CD14-positive monocyte (primary cell): ENCODE measurements at regions of chr16 and their contacts with region 1.

Region 1: GRCh38 chr16:20741554-20742285 is at the start of gene THUMPD1:
- DNase-seq: peak; percentile 94 to 96 (median 96)
- H3K4me3 ChIP-seq: peak within 1 kb of the TSS; percentile 84 to 97 (median 94)
- H3K4me3 Mint-ChIP-seq: peak within 1 kb of the TSS; percentile 94 to 99
- H3K27ac ChIP-seq: peak within 1 kb of the TSS; percentile 96 to 98
- H3K27ac Mint-ChIP-seq: peak within 1 kb of the TSS; percentile 95 to 98 (median 96)
- H3K4me1 ChIP-seq: peaks cover 44 to 50% of the 10 kb centered on the region in 2 donors
- H3K4me1 Mint-ChIP-seq: peaks cover 37% of the 10 kb centered on the region
- H3K27me3 ChIP-seq: no peaks in the 10 kb centered on the region
- H3K27me3 Mint-ChIP-seq: no peaks in the 10 kb centered on the region
- CTCF ChIP-seq: no peak
- polyA plus RNA-seq, gene THUMPD1: 16.1 to 32.2 (median 23.5) TPM

Region 2: DNA sequence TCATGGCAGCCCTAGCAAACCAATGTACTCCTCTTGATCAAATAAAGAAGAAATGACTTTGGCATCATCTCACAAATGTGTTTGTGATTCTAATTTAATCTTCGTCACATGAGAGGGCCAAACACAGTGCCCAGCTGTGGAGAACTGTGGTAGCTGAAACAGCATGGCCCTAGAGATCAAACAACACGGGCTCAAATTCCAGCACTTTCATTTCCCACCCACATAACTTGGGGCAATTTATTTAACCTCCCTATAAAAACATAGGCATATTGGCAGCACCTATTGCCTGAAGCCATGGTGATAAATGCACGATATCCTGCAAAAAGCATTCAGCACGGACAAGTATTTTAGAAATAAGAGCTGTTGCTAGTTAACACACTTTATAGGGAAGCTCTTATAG is 46.7 kb before region 1 on chr16:
- intact Hi-C with region 1: no loop called
- DNase-seq: no peak
- H3K4me3 ChIP-seq: no peak overlapping the region
- H3K4me3 Mint-ChIP-seq: no peak overlapping the region
- H3K27ac ChIP-seq: no peak overlapping the region
- H3K27ac Mint-ChIP-seq: peak overlapping the region in 1 of 7 donors; percentile 18
- H3K4me1 ChIP-seq: peaks cover 17 to 18% of the 10 kb centered on the region in 2 donors
- H3K4me1 Mint-ChIP-seq: peaks cover 31% of the 10 kb centered on the region
- H3K27me3 ChIP-seq: no peaks in the 10 kb centered on the region
- H3K27me3 Mint-ChIP-seq: peaks cover 0 to 2% (median 0%) of the 10 kb centered on the region in 3 donors
- CTCF ChIP-seq: no peak

Region 3: DNA sequence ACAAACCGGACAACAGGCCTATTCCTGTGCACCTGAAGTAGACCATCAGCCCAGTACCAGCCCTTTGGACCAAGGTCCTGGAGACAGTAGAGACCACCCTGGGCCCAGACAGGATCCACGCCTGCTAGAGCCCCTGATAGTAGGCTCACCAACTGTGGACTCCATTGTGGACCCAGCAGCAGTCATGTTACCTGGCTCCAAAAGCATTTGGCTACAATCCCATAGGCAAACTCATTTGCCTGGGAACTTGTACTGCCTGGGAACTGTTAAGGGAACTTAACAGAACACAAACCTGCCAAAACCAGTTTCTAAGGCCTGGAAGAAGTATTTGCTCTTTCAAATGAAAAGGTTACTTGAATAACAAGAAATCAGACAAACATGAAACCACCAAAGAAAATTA is 34.3 kb before region 1 on chr16:
- intact Hi-C with region 1: no loop called
- DNase-seq: no peak
- H3K4me3 ChIP-seq: no peak overlapping the region
- H3K4me3 Mint-ChIP-seq: no peak overlapping the region
- H3K27ac ChIP-seq: no peak overlapping the region
- H3K27ac Mint-ChIP-seq: peak overlapping the region in 1 of 7 donors; percentile 46
- H3K4me1 ChIP-seq: no peaks in the 10 kb centered on the region
- H3K4me1 Mint-ChIP-seq: no peaks in the 10 kb centered on the region
- H3K27me3 ChIP-seq: no peaks in the 10 kb centered on the region
- H3K27me3 Mint-ChIP-seq: no peaks in the 10 kb centered on the region
- CTCF ChIP-seq: no peak

Region 4: DNA sequence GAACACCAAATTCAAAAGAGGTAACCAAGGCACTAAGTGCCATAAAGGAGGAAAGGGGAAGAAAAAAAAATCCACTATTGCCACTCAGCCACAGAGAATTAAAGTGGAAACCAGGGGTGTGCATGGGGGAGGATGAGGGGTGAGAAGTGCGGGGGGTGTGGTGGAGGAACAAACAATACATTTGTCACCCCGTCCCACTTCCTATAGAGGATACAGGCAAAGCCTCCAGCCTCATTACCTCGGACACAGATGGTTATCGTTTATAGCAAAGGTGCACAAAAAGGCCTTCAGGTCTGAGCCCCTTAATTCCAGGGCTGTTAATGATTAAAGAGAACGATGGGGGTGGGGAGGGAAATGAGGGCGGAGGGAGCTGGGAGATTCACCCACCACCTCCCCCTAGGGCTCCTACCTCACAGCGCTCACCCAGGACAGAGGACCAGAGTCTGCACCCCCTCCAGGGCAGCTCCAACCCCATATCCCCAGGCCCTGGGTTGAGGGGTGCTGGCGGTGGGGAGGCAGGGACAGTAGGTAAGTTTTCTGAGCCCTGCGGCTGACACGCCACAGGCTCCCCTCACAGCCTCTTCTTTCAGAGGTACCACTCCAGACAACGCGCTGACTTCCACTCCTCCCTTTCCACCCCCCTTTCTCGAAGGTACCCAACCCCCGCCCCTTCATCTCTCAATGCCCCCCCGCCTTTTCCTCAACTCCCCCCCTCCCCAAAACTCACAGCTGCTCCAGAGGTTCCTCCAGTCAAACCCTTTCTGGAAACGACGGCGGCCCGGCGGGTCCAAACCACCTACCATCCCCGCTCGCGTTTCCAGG is 158.0 kb after region 1 on chr16:
- intact Hi-C with region 1: loop called in 1 of 2 experiments (anchors 10 kb)
- DNase-seq: peak in 2 of 3 donors; percentile 39 to 80
- H3K4me3 ChIP-seq: peak overlapping the region; percentile 53 to 83 (median 76)
- H3K4me3 Mint-ChIP-seq: peak overlapping the region; percentile 89 to 95
- H3K27ac ChIP-seq: peak overlapping the region; percentile 87 to 97
- H3K27ac Mint-ChIP-seq: peak overlapping the region; percentile 96 to 100 (median 99)
- H3K4me1 ChIP-seq: peaks cover 46 to 66% of the 10 kb centered on the region in 2 donors
- H3K4me1 Mint-ChIP-seq: peaks cover 64% of the 10 kb centered on the region
- H3K27me3 ChIP-seq: no peaks in the 10 kb centered on the region
- H3K27me3 Mint-ChIP-seq: peaks cover 0 to 6% (median 0%) of the 10 kb centered on the region in 3 donors
- CTCF ChIP-seq: no peak